Left colon (tissue), 2 donors: ENCODE measurements at regions of chr11 and their contacts with region 1.

Region 1: GRCh38 chr11:100066399-100066798 is 620.7 kb upstream of the ARHGAP42 start:
- DNase-seq: no peak
- ATAC-seq: no peak

Region 2: GRCh38 chr11:100094121-100094865 is 27.9 kb after region 1 on chr11:
- intact Hi-C with region 1: loop called in 1 of 2 experiments (anchors 2 kb)
- DNase-seq: no peak
- ATAC-seq: no peak